Activated CD4-positive, alpha-beta memory T cell treated with anti-CD3 and anti-CD28 coated beads for 36 hours (primary cell): ENCODE measurements at regions of chr18 and their contacts with region 1.

Region 1: DNA sequence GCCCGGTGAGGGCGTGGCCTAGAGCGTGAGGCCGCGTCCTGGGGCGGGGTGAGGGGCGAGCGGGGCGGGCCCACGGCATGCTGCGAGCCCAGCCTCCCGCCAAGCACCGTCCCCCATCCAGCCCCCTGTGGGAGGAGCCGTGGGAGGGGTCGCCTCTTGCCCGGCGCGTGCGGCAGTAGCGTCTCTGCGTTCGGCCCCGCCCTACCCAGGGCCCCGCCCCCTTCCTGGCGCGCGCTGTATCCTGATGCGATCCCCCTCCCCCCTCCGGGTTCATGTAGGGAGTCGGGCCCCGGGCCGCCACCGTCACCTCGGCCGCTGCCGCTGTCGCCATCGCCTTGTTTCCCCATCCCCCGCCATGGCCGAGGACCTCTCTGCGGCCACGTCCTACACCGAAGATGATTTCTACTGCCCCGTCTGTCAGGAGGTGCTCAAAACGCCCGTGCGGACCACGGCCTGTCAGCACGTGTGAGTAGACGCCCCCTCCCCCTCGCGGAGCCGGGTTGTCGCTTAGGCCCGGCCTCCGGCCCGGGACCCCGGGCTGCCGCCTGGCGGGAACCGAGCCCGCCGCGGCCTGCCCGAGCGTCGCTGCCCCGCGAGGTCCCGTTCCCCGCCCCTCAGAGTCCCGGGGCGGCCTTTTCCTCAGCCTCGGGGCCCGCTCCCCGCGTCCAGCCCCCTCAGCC is 888 bp downstream of the RNF138 start:
- DNase-seq: peak; percentile 100
- H3K4me3 Mint-ChIP-seq: peak overlapping the region; percentile 97
- H3K27ac Mint-ChIP-seq: peak overlapping the region; percentile 99
- H3K4me1 Mint-ChIP-seq: peaks cover 41% of the 10 kb centered on the region
- H3K27me3 Mint-ChIP-seq: no peaks in the 10 kb centered on the region

Region 2: DNA sequence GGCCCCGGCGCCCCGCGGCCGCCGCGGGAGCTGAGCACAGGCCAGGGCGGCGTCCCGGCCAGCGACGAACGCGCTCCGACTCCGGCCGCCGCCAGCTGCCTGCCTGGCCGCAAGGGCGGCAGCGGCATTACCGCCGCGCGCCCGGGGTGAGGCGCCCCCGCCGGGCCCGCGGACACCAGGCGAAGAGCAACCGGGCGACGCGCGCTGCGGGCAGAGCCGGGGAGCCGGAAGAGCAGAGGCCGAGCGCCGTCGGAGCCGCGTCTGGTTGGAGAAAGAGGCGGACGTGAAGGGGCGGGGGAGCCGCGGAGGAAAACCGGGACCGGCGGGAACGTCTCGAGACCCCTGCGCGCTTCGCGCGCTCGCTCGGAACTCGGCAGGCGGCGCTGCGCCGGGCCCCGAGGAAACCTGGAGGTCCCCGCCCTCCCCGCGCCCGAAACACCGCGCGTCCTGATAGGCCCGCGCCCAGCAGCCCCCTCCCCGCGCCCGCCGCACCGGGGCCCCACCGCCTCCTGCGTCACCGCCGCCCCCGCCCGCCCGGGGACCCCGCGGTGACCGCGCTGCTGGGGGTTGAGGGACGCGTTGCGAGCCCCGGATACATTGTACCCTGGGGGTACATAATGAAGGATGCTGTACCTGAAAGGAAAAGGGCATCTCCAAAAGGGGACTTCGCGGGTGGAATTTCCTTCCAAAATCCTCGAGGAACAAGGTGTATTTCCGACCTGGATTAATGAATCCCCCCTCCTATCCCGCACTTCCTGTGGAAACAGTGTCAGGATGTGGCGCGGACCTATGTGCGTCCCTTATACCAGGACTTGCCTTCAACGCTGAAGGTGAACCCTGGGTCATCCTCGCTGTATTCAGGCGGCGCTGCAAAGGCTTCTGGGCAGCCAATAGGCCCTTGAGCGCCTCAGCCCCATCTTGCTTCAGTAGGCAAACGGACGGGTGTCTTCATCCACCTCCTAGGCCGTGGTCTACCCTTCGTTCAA is 407.2 kb before region 1 on chr18:
- CTCF ChIA-PET with region 1: no interaction called
- POLR2A ChIA-PET with region 1: no interaction called
- intact Hi-C with region 1: loop called (anchors 10 kb)
- DNase-seq: peak; percentile 69
- H3K4me3 Mint-ChIP-seq: peak overlapping the region; percentile 78
- H3K27ac Mint-ChIP-seq: peak overlapping the region; percentile 45
- H3K4me1 Mint-ChIP-seq: peaks cover 24% of the 10 kb centered on the region
- H3K27me3 Mint-ChIP-seq: peaks cover 36% of the 10 kb centered on the region

Region 3: DNA sequence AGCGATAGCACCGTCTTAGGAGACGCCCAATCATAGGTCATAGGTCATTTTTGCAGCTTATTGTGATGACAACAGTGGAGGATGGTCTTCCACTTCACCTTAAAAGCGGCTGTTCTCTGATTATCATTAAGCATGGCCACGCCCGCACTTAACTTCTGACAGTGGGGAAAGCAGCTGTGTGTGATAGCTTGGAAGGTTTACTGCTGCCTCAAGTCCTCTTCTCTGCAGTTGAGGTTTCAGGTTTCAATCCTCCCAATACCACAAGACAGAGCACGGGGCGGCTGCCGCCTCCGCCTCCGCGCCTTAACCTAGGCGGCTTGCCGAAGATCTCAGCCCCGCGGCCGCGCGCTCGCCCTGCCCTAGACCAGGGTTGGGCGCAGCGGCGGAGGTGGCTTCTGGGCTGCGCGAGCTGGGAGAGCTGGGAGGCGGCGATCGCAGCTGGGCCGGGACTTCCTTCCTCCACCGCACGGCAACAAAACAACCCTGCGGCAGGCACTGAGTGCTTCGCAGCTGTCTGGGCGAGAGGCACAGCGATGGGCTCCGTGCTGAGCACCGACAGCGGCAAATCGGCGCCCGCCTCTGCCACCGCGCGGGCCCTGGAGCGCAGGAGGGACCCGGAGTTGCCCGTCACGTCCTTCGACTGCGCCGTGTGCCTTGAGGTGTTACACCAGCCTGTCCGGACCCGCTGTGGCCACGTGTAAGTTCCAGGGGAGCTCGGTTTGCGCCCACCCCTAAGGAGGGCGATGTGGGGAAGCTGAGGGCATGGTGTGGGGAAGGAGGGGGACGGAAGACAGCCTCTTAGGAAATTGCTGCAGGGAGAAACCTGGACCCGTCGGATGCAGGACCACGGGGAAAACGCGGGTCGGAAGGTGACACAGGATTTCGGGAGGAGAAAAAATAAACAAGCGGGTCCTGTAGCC is 74.0 kb before region 1 on chr18 and contains the start of gene RNF125:
- CTCF ChIA-PET with region 1: interaction called, 15 read pairs
- POLR2A ChIA-PET with region 1: interaction called, 44 read pairs
- intact Hi-C with region 1: loop called (anchors 1 kb)
- DNase-seq: peak; percentile 90
- H3K4me3 Mint-ChIP-seq: peak within 1 kb of the TSS; percentile 100
- H3K27ac Mint-ChIP-seq: peak within 1 kb of the TSS; percentile 97
- H3K4me1 Mint-ChIP-seq: peaks cover 40% of the 10 kb centered on the region
- H3K27me3 Mint-ChIP-seq: no peaks in the 10 kb centered on the region
- total RNA-seq, gene RNF125: 36.8 to 37.6 TPM

Region 4: GRCh38 chr18:32048507-32049091 is 44.0 kb before region 1 on chr18:
- CTCF ChIA-PET with region 1: no interaction called
- POLR2A ChIA-PET with region 1: interaction called, 8 read pairs
- intact Hi-C with region 1: loop called (anchors 1 kb)
- DNase-seq: peak; percentile 45
- H3K4me3 Mint-ChIP-seq: no peak overlapping the region
- H3K27ac Mint-ChIP-seq: peak overlapping the region; percentile 91
- H3K4me1 Mint-ChIP-seq: peaks cover 39% of the 10 kb centered on the region
- H3K27me3 Mint-ChIP-seq: no peaks in the 10 kb centered on the region

Region 5: GRCh38 chr18:32110005-32110404 is 17.4 kb after region 1 on chr18:
- CTCF ChIA-PET with region 1: interaction called, 3 read pairs
- POLR2A ChIA-PET with region 1: no interaction called
- intact Hi-C with region 1: loop called (anchors 2 kb)
- DNase-seq: no peak
- H3K4me3 Mint-ChIP-seq: no peak overlapping the region
- H3K27ac Mint-ChIP-seq: no peak overlapping the region
- H3K4me1 Mint-ChIP-seq: peaks cover 57% of the 10 kb centered on the region
- H3K27me3 Mint-ChIP-seq: no peaks in the 10 kb centered on the region